Head of caudate nucleus (tissue), 42 donors: ENCODE measurements at regions of chr10 and their contacts with region 1.

Region 1: GRCh38 chr10:97792141-97792721 is 20.4 kb upstream of the SFRP5 start:
- DNase-seq: peak; percentile 54 to 90 (median 78)

Region 2: GRCh38 chr10:97543025-97543575 is 249.1 kb before region 1 on chr10:
- intact Hi-C with region 1: no loop called
- DNase-seq: peak; percentile 73 to 98 (median 89)

Region 3: GRCh38 chr10:97869091-97870042 is 77.1 kb after region 1 on chr10:
- intact Hi-C with region 1: loop called (anchors 5 kb)
- DNase-seq: peak; percentile 39 to 94 (median 80)

Region 4: GRCh38 chr10:98599032-98599610 is 806.9 kb after region 1 on chr10:
- intact Hi-C with region 1: no loop called
- DNase-seq: no peak